ENCODE measurements at regions of chr2 and their contacts with region 1.

Region 1: GRCh38 chr2:236180831-236181453 is 12.8 kb upstream of the GBX2 start:
- DNase-seq: peak; percentile 84
- H3K4me3 ChIP-seq: no peak overlapping the region; a peak in 1 of 4 replicates
- H3K27ac ChIP-seq: peak overlapping the region in 1 of 2 experiments; percentile 58; a peak in 2 of 4 replicates
- H3K4me1 ChIP-seq: peaks cover 0 to 16% of the 10 kb centered on the region in 2 experiments; a peak in 3 of 4 replicates
- H3K27me3 ChIP-seq: no peaks in the 10 kb centered on the region
- CTCF ChIP-seq: peak; percentile 89
- EP300 ChIP-seq: no peak
- RAD21 ChIP-seq: peak; percentile 88

Region 2: GRCh38 chr2:235614900-235615712 is 565.8 kb before region 1 on chr2:
- CTCF ChIA-PET with region 1: no interaction called
- POLR2A ChIA-PET with region 1: no interaction called
- DNase-seq: no peak
- H3K4me3 ChIP-seq: no peak overlapping the region
- H3K27ac ChIP-seq: peak overlapping the region in 1 of 2 experiments; percentile 35; a peak in 2 of 4 replicates
- H3K4me1 ChIP-seq: peaks cover 15 to 32% of the 10 kb centered on the region in 2 experiments; a peak in 2 of 4 replicates
- H3K27me3 ChIP-seq: no peaks in the 10 kb centered on the region
- CTCF ChIP-seq: no peak
- EP300 ChIP-seq: no peak
- RAD21 ChIP-seq: no peak

Region 3: DNA sequence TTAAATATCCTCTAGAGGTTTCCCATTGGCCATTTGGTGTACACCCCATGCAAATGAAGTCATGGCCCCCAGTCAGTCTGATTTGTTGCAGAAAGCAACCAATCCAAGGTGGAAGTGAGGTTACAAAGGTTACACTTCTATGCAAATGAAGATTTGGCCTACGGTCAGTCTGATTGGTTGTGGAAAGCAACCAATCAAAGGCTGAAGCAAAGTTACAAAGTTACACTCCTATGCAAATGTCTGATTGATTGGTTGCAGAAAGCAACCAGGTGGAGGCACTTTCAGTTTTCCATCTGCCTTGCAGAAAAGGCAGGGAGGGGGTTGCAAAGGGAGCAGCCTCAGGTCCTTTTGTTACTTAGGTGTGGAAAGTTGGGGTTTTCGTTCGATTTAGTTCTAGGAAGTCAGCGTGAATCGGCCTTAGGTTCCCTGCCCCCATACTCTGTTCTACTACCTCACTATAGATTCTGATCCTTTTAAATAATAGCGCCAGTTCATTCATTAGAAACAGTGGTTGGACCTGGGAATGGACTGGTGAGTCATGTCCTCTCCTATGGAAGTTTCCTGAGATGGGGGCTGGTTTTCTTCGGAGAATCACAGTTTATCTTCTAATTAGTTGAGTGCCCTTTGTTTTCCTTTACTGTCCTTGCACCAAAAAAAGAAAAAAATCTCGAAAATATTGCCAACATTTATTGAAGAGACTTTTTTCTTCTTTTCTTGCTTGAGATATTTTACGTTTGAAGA is 407.6 kb before region 1 on chr2:
- CTCF ChIA-PET with region 1: interaction called, 372 read pairs
- POLR2A ChIA-PET with region 1: no interaction called
- DNase-seq: no peak
- H3K4me3 ChIP-seq: no peak overlapping the region
- H3K27ac ChIP-seq: no peak overlapping the region
- H3K4me1 ChIP-seq: peaks cover 0 to 4% of the 10 kb centered on the region in 2 experiments; a peak in 1 of 4 replicates
- H3K27me3 ChIP-seq: no peaks in the 10 kb centered on the region
- CTCF ChIP-seq: no peak
- EP300 ChIP-seq: no peak
- RAD21 ChIP-seq: no peak

Region 4: GRCh38 chr2:235793163-235793752 is 387.7 kb before region 1 on chr2:
- CTCF ChIA-PET with region 1: interaction called, 248 read pairs
- POLR2A ChIA-PET with region 1: no interaction called
- DNase-seq: peak; percentile 37
- H3K4me3 ChIP-seq: no peak overlapping the region
- H3K27ac ChIP-seq: no peak overlapping the region
- H3K4me1 ChIP-seq: peaks cover 0 to 3% of the 10 kb centered on the region in 2 experiments; a peak in 1 of 4 replicates
- H3K27me3 ChIP-seq: no peaks in the 10 kb centered on the region
- CTCF ChIP-seq: no peak; the same call in 1 of the 2 replicates
- EP300 ChIP-seq: no peak
- RAD21 ChIP-seq: peak; percentile 42

Region 5: DNA sequence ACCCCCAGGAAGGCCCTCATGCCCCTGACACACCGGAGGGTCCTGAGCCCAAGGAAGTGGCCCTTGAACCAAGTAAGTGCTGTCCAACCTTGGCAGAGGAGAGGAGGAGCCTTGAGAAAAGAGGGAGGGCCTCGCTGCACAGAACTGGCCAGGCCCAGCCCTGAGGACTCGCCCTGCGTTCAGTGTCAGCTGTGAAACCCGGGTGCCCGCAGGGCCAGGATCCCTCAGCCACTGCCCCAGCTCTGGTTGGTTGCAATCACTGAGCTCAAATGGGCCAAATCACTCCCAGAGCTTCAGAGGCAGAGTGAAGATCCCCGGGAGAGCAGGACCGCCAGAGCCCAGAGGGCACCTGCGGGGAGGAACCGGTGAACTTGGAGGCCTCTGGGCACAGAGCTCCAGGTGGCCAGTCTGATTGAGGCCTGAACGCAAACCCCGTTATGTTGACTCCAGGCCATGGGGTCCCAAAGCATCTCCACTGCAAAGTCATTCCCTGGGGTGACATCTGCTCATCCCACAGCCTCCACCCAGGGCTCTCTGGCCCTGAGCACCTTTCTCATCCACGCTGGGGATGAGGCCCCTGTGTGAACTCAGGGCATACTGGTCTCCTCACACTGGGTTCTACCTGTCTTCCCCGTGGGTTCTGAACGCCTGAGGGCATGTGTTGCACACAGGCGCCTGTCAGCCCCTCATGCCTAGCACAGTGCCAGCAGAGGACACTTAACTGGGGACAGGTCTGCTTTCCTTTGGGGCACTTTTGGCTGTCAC is 24.7 kb before region 1 on chr2:
- CTCF ChIA-PET with region 1: interaction called, 28 read pairs
- POLR2A ChIA-PET with region 1: no interaction called
- DNase-seq: no peak
- H3K4me3 ChIP-seq: no peak overlapping the region
- H3K27ac ChIP-seq: no peak overlapping the region
- H3K4me1 ChIP-seq: no peaks in the 10 kb centered on the region
- H3K27me3 ChIP-seq: no peaks in the 10 kb centered on the region
- CTCF ChIP-seq: no peak
- EP300 ChIP-seq: no peak
- RAD21 ChIP-seq: no peak

Region 6: GRCh38 chr2:236168110-236169067 is 12.6 kb before region 1 on chr2 and contains the start of gene GBX2:
- CTCF ChIA-PET with region 1: interaction called, 43 read pairs
- POLR2A ChIA-PET with region 1: interaction called, 3 read pairs
- DNase-seq: peak; percentile 91
- H3K4me3 ChIP-seq: peak within 1 kb of the TSS; percentile 34 to 60
- H3K27ac ChIP-seq: no peak within 1 kb of the TSS
- H3K4me1 ChIP-seq: peaks cover 0 to 12% of the 10 kb centered on the region in 2 experiments; a peak in 2 of 4 replicates
- H3K27me3 ChIP-seq: peaks cover 92% of the 10 kb centered on the region
- CTCF ChIP-seq: no peak
- EP300 ChIP-seq: no peak
- RAD21 ChIP-seq: no peak
- polyA plus RNA-seq, gene GBX2: 0.03 and 0.16 TPM in 2 replicates

Measured in SK-N-SH (cell line).